Caco-2 (cell line): ENCODE measurements at regions of chr5 and their contacts with region 1.

Region 1: GRCh38 chr5:112146323-112147226 is 272.5 kb downstream of the EPB41L4A start:
- DNase-seq: peak; percentile 48 to 59
- H3K4me3 ChIP-seq: no peak overlapping the region
- H3K4me3 Mint-ChIP-seq: no peak overlapping the region
- H3K27ac Mint-ChIP-seq: no peak overlapping the region
- H3K4me1 ChIP-seq: no peaks in the 10 kb centered on the region
- H3K4me1 Mint-ChIP-seq: no peaks in the 10 kb centered on the region
- H3K27me3 ChIP-seq: no peaks in the 10 kb centered on the region
- H3K27me3 Mint-ChIP-seq: peaks cover 6% of the 10 kb centered on the region
- CTCF ChIP-seq: peak; percentile 64 to 75

Region 2: GRCh38 chr5:111278845-111279504 is 867.6 kb before region 1 on chr5:
- CTCF ChIA-PET with region 1: no interaction called
- POLR2A ChIA-PET with region 1: no interaction called
- intact Hi-C with region 1: loop called (anchors 10 kb)
- DNase-seq: peak; percentile 60 to 78
- H3K4me3 ChIP-seq: no peak overlapping the region
- H3K4me3 Mint-ChIP-seq: no peak overlapping the region
- H3K27ac Mint-ChIP-seq: no peak overlapping the region
- H3K4me1 ChIP-seq: no peaks in the 10 kb centered on the region
- H3K4me1 Mint-ChIP-seq: no peaks in the 10 kb centered on the region
- H3K27me3 ChIP-seq: no peaks in the 10 kb centered on the region
- H3K27me3 Mint-ChIP-seq: peaks cover 3% of the 10 kb centered on the region
- CTCF ChIP-seq: peak; percentile 84 to 87

Region 3: DNA sequence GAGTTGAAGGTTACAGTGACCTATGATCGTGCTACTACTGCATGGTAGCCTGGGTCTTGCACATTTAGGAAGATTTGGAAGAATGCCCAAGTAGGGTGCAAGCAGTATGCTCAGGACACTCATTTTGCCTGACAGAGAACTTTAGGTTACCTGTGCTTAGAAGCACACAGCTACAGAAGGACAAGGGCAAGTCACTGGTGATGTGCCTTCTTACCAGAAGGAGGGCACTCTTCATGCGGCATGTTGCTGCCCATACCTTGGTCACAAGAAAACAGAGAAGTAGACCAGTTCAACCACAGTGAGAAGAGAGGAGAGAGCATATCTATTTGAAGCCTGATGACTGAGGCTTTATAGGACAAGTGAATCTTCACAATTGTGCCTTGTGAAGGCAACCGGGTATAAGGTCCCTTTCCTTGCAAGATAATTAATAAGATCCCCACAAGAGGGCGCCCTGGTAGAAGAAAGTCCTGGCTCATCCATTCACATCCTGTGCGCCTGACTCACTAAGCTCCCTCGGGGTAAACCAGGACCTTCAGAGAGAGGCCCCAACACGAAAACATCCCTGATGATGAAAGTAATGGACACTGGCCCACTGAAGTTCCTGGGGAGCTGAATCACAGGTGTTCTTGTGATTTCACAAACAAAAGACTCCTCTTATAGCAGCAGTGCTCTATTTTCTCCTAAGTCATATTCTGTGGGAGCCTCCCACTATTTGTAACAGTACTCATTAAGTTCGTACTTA is 596.1 kb before region 1 on chr5:
- CTCF ChIA-PET with region 1: interaction called, 3 read pairs
- POLR2A ChIA-PET with region 1: no interaction called
- intact Hi-C with region 1: loop called (anchors 1 kb)
- DNase-seq: peak; percentile 69 to 84
- H3K4me3 ChIP-seq: no peak overlapping the region
- H3K4me3 Mint-ChIP-seq: no peak overlapping the region
- H3K27ac Mint-ChIP-seq: no peak overlapping the region
- H3K4me1 ChIP-seq: no peaks in the 10 kb centered on the region
- H3K4me1 Mint-ChIP-seq: no peaks in the 10 kb centered on the region
- H3K27me3 ChIP-seq: no peaks in the 10 kb centered on the region
- H3K27me3 Mint-ChIP-seq: peaks cover 2% of the 10 kb centered on the region
- CTCF ChIP-seq: peak; percentile 44 to 70

Region 4: DNA sequence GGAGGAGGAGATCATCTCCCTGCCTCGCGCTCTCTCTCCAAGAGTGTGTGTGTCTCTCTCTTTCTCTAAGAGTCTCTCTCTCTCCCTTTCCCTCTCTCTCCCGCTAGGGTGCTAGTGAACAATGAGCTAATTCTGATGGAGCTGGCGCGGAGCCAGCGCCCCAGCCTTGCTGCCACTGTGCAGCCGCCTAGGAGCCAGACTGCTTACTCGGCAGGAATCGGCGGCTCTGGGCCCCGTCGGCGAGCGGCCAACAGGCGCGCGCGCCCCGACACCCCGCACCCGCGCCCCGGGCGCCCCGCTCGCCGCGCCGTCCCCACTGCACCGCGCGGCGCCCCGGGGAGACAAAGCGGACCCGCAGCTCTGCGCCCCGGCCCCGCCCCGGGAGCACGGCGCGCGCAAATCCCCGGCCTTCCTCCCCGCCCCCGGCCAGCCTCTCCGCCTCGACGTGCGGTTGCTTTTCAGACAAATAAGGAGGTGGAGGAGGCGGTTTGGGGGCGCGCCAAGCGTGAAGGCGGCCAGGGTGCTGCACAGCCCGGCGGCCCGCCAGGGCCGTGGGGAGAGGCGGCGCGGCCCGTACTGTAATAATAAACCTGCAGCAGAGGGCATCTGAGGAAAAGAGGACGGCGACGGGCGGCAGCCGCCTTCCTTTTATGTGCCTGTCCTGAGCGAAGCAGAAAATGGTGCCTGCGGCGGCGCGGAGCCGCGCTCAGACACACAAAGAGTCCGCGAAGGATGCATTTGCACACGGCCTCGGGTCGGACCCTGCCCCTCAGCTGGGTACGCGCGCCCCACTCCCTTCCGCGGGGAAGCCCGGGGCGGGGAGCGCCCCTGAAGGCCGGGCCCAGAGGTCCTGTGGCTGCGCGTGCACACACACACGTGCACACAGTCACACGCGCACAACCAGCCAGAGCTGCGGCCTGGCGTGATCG is 389.0 kb before region 1 on chr5:
- CTCF ChIA-PET with region 1: no interaction called
- POLR2A ChIA-PET with region 1: no interaction called
- intact Hi-C with region 1: loop called (anchors 5 kb)
- DNase-seq: peak; percentile 72 to 74
- H3K4me3 ChIP-seq: peak overlapping the region; percentile 46
- H3K4me3 Mint-ChIP-seq: peak overlapping the region; percentile 73
- H3K27ac Mint-ChIP-seq: peak overlapping the region; percentile 82
- H3K4me1 ChIP-seq: peaks cover 11% of the 10 kb centered on the region; the same call in 1 of the 2 replicates
- H3K4me1 Mint-ChIP-seq: peaks cover 4% of the 10 kb centered on the region
- H3K27me3 ChIP-seq: peaks cover 1% of the 10 kb centered on the region; the same call in 1 of the 2 replicates
- H3K27me3 Mint-ChIP-seq: peaks cover 18% of the 10 kb centered on the region
- CTCF ChIP-seq: peak; percentile 9 to 38

Region 5: GRCh38 chr5:111857623-111858022 is 289.0 kb before region 1 on chr5:
- CTCF ChIA-PET with region 1: no interaction called
- POLR2A ChIA-PET with region 1: no interaction called
- intact Hi-C with region 1: loop called (anchors 2 kb)
- DNase-seq: no peak
- H3K4me3 ChIP-seq: no peak overlapping the region
- H3K4me3 Mint-ChIP-seq: no peak overlapping the region
- H3K27ac Mint-ChIP-seq: no peak overlapping the region
- H3K4me1 ChIP-seq: no peaks in the 10 kb centered on the region
- H3K4me1 Mint-ChIP-seq: no peaks in the 10 kb centered on the region
- H3K27me3 ChIP-seq: no peaks in the 10 kb centered on the region
- H3K27me3 Mint-ChIP-seq: peaks cover 9% of the 10 kb centered on the region
- CTCF ChIP-seq: no peak

Region 6: GRCh38 chr5:111997711-111998110 is 148.9 kb before region 1 on chr5:
- CTCF ChIA-PET with region 1: no interaction called
- POLR2A ChIA-PET with region 1: no interaction called
- intact Hi-C with region 1: no loop called
- DNase-seq: no peak
- H3K4me3 ChIP-seq: no peak overlapping the region
- H3K4me3 Mint-ChIP-seq: no peak overlapping the region
- H3K27ac Mint-ChIP-seq: no peak overlapping the region
- H3K4me1 ChIP-seq: no peaks in the 10 kb centered on the region
- H3K4me1 Mint-ChIP-seq: no peaks in the 10 kb centered on the region
- H3K27me3 ChIP-seq: no peaks in the 10 kb centered on the region
- H3K27me3 Mint-ChIP-seq: peaks cover 7% of the 10 kb centered on the region
- CTCF ChIP-seq: no peak